Heart right ventricle (tissue), 16 donors: ENCODE measurements at regions of chr11 and their contacts with region 1.

Region 1: GRCh38 chr11:45846974-45847910 is at the start of gene CRY2:
- DNase-seq: peak; percentile 99 to 100
- ATAC-seq: peak; percentile 95 to 98 (median 97)
- H3K4me3 ChIP-seq: peak within 1 kb of the TSS; percentile 58 to 99 (median 93)
- H3K27ac ChIP-seq: peak within 1 kb of the TSS; percentile 91 to 99 (median 98)
- H3K4me1 ChIP-seq: peaks cover 18 to 60% (median 55%) of the 10 kb centered on the region in 9 donors
- H3K27me3 ChIP-seq: no peaks in the 10 kb centered on the region
- CTCF ChIP-seq: no peak
- total RNA-seq, gene CRY2: 61.8 to 131 (median 98.0) TPM

Region 2: GRCh38 chr11:45804761-45805304 is 42.4 kb before region 1 on chr11 and contains the start of gene SLC35C1:
- intact Hi-C with region 1: loop called in 4 of 10 experiments (anchors 1 to 5 kb)
- DNase-seq: peak; percentile 97
- ATAC-seq: peak; percentile 94 to 98 (median 97)
- H3K4me3 ChIP-seq: peak within 1 kb of the TSS; percentile 53 to 95 (median 78)
- H3K27ac ChIP-seq: peak within 1 kb of the TSS; percentile 59 to 93 (median 90)
- H3K4me1 ChIP-seq: peaks cover 14 to 56% (median 39%) of the 10 kb centered on the region in 9 donors
- H3K27me3 ChIP-seq: no peaks in the 10 kb centered on the region
- CTCF ChIP-seq: peak in 6 of 9 donors; percentile 11 to 57 (median 33)
- total RNA-seq, gene SLC35C1: 4.5 to 9.6 (median 6.1) TPM

Region 3: DNA sequence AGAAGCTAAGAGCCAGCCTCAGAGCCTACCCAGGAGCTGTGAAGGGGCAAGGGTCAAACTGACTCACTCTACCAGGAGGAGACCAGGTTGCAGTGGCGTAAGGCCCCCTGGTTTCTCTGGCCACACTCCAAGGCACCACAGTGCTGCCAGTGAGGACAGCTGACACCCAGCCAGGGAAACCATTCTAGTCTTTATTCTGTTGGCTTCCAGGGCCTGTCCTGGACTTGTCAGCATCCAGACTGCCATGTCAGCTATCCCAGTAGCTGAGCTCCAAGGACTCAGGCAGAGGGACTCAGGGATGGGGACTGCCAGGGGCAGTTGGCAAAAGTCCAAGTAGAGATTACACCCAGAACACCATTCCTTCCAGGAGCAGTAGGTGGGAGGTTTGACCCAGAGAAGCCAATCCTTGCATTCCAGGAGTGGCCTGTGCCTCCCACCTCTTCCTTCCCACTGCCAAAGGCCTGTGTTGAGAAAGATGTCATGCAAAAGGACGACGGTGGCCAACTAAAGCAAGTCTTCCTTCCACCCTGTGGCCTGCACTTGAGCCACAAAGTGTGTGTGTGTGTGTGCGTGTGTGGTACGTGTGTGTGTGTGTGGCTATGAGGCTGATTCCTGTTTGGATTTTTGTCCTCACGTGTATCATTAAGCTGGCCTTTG is 34.6 kb after region 1 on chr11:
- intact Hi-C with region 1: no loop called
- DNase-seq: no peak
- ATAC-seq: no peak
- H3K4me3 ChIP-seq: no peak overlapping the region
- H3K27ac ChIP-seq: no peak overlapping the region
- H3K4me1 ChIP-seq: peaks cover 0 to 25% (median 10%) of the 10 kb centered on the region in 9 donors
- H3K27me3 ChIP-seq: peaks cover 0 to 13% (median 0%) of the 10 kb centered on the region in 7 donors
- CTCF ChIP-seq: no peak

Region 4: GRCh38 chr11:45899448-45900173 is 52.4 kb after region 1 on chr11:
- intact Hi-C with region 1: loop called in 1 of 10 experiments (anchors 10 kb)
- DNase-seq: peak; percentile 83 to 85
- ATAC-seq: peak; percentile 73 to 90 (median 85)
- H3K4me3 ChIP-seq: peak overlapping the region; percentile 28 to 71 (median 62)
- H3K27ac ChIP-seq: peak overlapping the region in 8 of 10 donors; percentile 39 to 82 (median 70)
- H3K4me1 ChIP-seq: peaks cover 10 to 31% (median 21%) of the 10 kb centered on the region in 9 donors
- H3K27me3 ChIP-seq: peaks cover 0 to 60% (median 0%) of the 10 kb centered on the region in 7 donors
- CTCF ChIP-seq: peak in 1 of 9 donors; percentile 7

Region 5: GRCh38 chr11:45917623-45918330 is 70.5 kb after region 1 on chr11 and contains the start of gene PEX16:
- intact Hi-C with region 1: loop called in 3 of 10 experiments (anchors 1 to 5 kb)
- DNase-seq: peak; percentile 96
- ATAC-seq: peak; percentile 92 to 97 (median 94)
- H3K4me3 ChIP-seq: peak within 1 kb of the TSS; percentile 75 to 99 (median 92)
- H3K27ac ChIP-seq: peak within 1 kb of the TSS; percentile 72 to 96 (median 89)
- H3K4me1 ChIP-seq: peaks cover 15 to 57% (median 33%) of the 10 kb centered on the region in 9 donors
- H3K27me3 ChIP-seq: peaks cover 0 to 15% (median 12%) of the 10 kb centered on the region in 7 donors
- CTCF ChIP-seq: no peak
- total RNA-seq, gene PEX16: 10.8 to 17.8 (median 13.6) TPM

Region 6: DNA sequence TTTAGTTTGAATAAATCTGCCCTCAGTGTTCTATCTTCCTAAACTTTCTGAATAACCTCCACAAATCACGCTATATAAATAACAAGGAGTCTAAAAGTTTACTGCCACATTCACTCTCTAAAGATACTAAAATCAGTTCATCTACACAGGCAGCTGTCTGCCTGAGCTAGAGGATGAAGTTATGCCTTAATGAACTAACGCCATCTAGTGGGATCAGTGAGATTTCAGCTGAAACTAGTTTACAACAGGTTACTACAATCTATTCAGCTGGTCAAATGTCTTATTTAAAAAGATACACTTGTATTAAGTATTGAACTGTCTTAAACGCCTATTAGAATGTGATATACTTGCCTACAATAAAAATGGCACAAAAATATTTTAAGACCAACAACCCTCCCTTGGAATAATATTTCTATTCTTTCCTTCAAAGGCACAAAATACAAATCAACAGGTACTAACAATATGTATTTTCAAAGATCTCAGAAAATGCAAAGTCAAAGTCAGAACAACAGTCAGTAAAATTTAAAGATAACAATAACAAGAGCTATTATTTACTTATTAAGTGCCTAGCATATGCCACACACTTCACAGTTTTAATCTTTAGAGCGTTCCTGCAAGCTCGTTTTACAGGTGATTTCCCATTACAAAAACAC is 159.3 kb after region 1 on chr11:
- intact Hi-C with region 1: loop called in 3 of 10 experiments (anchors 2 to 10 kb)
- DNase-seq: peak in 1 of 2 donors; percentile 47
- ATAC-seq: peak in 6 of 8 donors; percentile 54 to 83 (median 78)
- H3K4me3 ChIP-seq: no peak overlapping the region
- H3K27ac ChIP-seq: no peak overlapping the region
- H3K4me1 ChIP-seq: peaks cover 0 to 42% (median 23%) of the 10 kb centered on the region in 9 donors
- H3K27me3 ChIP-seq: no peaks in the 10 kb centered on the region
- CTCF ChIP-seq: peak; percentile 60 to 88 (median 79)

Region 7: DNA sequence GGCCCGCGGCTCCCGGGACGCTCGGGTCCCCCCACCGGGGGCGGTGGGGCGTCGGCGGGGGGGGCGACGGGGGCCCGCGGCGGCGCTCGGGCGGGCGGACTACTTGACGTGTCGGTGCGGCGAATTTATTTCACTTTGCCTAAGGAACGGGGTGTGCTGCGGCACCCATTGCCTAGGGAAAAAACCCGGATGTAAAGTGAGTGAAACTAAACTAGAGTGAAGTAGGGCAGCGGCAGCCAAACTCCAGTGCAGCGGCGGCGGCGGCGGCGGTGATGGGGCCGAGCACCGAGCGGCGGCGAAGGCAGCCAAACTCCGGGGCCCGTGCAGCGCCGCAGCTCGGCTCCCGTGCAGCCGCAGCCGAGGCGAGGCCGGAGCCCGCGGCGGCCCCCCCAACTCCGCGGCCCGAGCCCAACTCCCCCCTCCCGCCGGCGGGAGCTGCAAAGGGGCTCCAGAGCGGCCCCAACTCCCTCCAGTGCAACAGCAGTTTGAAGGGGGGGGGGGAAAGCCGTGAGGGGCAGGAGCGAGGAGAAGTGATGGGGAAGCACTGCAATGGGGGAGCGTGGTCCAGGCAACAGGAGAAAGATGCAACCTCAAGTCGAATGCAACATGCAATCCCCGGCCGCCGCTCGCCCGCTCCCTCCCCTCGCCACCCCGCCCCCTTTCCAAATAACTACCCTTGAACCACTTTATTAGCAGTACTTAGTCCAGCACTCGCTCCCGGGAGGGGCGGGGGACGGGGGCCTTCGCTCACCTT is 274.7 kb after region 1 on chr11:
- intact Hi-C with region 1: loop called in 1 of 10 experiments (anchors 5 kb)
- DNase-seq: peak; percentile 73 to 84
- ATAC-seq: peak; percentile 3 to 57 (median 30)
- H3K4me3 ChIP-seq: peak overlapping the region; percentile 51 to 84 (median 74)
- H3K27ac ChIP-seq: peak overlapping the region; percentile 72 to 97 (median 94)
- H3K4me1 ChIP-seq: peaks cover 0 to 37% (median 23%) of the 10 kb centered on the region in 9 donors
- H3K27me3 ChIP-seq: no peaks in the 10 kb centered on the region
- CTCF ChIP-seq: no peak